ENCODE measurements at regions of chr7 and their contacts with region 1.

Region 1: GRCh38 chr7:50349963-50350944 is 45.7 kb downstream of the IKZF1 start:
- DNase-seq: peak; percentile 95
- H3K4me3 Mint-ChIP-seq: peak overlapping the region; percentile 33
- H3K27ac Mint-ChIP-seq: peak overlapping the region; percentile 95
- H3K4me1 Mint-ChIP-seq: peaks cover 97% of the 10 kb centered on the region
- H3K27me3 Mint-ChIP-seq: no peaks in the 10 kb centered on the region

Region 2: DNA sequence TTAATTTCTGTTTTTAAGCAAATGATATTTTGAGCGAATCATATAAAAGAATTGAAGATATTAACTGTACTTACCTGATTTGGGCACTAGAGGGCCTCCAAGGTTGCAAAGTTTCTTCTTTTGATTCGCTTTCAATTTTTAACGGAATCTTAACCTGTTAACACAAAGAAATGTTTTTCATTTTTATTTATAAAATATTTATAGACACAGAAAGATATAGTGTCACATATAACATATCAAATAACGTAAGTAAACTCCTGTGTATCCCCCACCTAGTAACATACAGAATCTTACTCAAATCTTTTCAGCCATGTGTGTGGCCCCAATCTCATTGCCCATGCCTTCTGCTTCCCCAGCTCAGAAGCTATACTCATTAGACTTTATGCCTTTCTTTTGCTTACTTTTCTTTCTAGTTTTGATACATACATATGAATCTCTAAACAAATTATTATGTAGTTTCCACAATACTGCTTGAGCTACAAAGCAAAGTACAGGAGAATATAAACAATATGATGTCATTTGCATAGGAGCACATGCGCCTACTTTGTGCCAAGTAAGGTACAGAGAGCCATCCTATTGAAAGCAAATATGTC is 207.7 kb before region 1 on chr7:
- CTCF ChIA-PET with region 1: interaction called, 3 read pairs
- intact Hi-C with region 1: loop called (anchors 1 kb)
- DNase-seq: peak; percentile 64
- H3K4me3 Mint-ChIP-seq: peak overlapping the region; percentile 45
- H3K27ac Mint-ChIP-seq: peak overlapping the region; percentile 82
- H3K4me1 Mint-ChIP-seq: peaks cover 43% of the 10 kb centered on the region
- H3K27me3 Mint-ChIP-seq: no peaks in the 10 kb centered on the region

Region 3: GRCh38 chr7:50156706-50157105 is 193.5 kb before region 1 on chr7:
- CTCF ChIA-PET with region 1: no interaction called
- intact Hi-C with region 1: loop called (anchors 1 kb)
- DNase-seq: no peak
- H3K4me3 Mint-ChIP-seq: peak overlapping the region; percentile 50
- H3K27ac Mint-ChIP-seq: peak overlapping the region; percentile 92
- H3K4me1 Mint-ChIP-seq: peaks cover 45% of the 10 kb centered on the region
- H3K27me3 Mint-ChIP-seq: no peaks in the 10 kb centered on the region

Region 4: DNA sequence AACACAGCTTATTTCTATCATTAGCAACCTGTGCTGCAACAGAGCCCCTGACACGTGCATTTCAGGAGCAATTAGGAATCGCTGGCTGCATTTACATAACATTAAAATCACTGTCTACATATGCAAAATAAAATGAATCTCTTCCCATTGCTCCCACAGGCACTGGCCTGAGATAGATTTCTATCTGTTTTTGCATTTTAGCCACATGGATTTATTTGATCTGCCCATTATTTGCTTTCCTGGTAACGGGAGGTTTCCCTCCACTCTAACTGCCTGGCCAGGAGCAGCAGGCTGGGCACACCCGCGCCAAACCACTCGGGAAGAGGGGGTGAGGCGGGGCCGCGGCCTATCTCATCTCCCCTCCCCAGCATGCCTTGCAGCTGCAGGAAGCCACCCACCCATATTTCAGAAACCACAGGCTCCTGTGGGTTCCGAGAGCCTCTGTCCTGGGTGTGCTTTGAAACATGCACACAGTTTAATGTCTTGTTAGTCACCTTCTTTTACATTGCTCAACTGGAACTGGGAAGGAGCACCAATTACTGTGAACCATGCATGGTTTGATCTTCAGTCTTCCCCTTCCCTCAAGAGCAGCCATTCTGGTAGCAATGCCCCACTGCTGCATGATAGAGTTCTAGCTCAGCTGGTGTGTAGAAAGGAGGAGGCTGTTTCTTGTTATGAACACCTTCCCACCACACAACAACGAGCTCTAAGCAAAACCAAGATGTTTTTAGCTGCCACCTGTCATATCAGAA is 83.4 kb before region 1 on chr7:
- CTCF ChIA-PET with region 1: interaction called, 4 read pairs
- intact Hi-C with region 1: loop called (anchors 1 kb)
- DNase-seq: peak; percentile 84
- H3K4me3 Mint-ChIP-seq: peak overlapping the region; percentile 55
- H3K27ac Mint-ChIP-seq: peak overlapping the region; percentile 94
- H3K4me1 Mint-ChIP-seq: peaks cover 91% of the 10 kb centered on the region
- H3K27me3 Mint-ChIP-seq: no peaks in the 10 kb centered on the region

Region 5: GRCh38 chr7:50317221-50317678 is 33.0 kb before region 1 on chr7:
- CTCF ChIA-PET with region 1: interaction called, 21 read pairs
- intact Hi-C with region 1: loop called (anchors 1 kb)
- DNase-seq: peak; percentile 77
- H3K4me3 Mint-ChIP-seq: peak overlapping the region; percentile 71
- H3K27ac Mint-ChIP-seq: peak overlapping the region; percentile 99
- H3K4me1 Mint-ChIP-seq: peaks cover 90% of the 10 kb centered on the region
- H3K27me3 Mint-ChIP-seq: no peaks in the 10 kb centered on the region

Region 6: DNA sequence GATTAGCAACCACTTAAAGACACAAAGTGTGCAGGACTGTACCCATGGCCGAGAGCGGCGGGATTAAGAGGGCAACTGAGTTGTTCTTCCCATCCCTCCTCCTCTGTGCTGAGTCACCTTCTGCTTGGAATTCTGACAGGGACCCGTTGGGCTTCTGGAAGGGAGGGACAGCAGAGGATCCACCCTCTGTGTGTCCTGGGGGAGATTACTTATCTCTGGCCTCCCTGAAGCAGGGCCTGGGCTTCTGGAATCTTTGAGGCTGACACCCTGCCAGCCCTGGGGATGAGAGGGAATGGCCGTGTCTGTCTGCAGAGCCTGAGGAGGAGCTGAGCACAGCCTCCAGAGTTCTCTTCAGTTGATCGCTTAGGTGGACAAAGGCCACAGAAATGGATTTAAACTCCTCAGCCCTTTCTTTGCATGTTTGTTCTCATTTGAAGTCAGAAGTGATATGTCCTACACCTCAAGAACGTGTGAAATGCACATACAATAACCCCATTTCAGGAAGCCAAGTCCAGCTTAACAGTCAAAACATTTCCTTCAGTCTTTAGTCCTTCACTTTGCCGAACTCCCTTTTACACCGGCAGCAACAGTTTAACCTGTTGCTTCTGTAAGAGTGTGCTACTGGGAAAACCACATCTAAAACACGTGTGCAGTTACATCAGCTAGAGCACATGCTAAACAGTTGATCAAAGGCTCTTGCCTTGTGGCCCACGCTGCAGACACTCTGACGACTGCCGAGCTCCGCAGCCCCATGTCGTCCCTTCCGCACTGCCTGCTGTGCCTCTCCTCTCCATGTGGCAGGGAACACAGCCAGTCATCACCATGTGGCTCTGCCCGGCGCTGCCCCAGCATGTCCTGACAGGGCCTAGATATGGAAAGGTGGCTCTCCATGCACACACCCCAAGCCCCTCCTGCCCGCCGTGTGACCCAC is 10.0 kb after region 1 on chr7:
- CTCF ChIA-PET with region 1: interaction called, 264 read pairs
- intact Hi-C with region 1: loop called (anchors 1 kb)
- DNase-seq: peak; percentile 91
- H3K4me3 Mint-ChIP-seq: peak overlapping the region; percentile 56
- H3K27ac Mint-ChIP-seq: peak overlapping the region; percentile 100
- H3K4me1 Mint-ChIP-seq: peaks cover 97% of the 10 kb centered on the region
- H3K27me3 Mint-ChIP-seq: no peaks in the 10 kb centered on the region

Region 7: GRCh38 chr7:50418086-50418515 is 67.8 kb after region 1 on chr7:
- CTCF ChIA-PET with region 1: interaction called, 14 read pairs
- intact Hi-C with region 1: no loop called
- DNase-seq: peak; percentile 92
- H3K4me3 Mint-ChIP-seq: no peak overlapping the region
- H3K27ac Mint-ChIP-seq: no peak overlapping the region
- H3K4me1 Mint-ChIP-seq: peaks cover 24% of the 10 kb centered on the region
- H3K27me3 Mint-ChIP-seq: no peaks in the 10 kb centered on the region

Measured in activated naive CD4-positive, alpha-beta T cell treated with anti-CD3 and anti-CD28 coated beads for 36 hours (primary cell).